ENCODE measurements at regions of chr6 and their contacts with region 1.

Region 1: GRCh38 chr6:147035886-147036285 is 168.3 kb upstream of the STXBP5 start:
- DNase-seq: no peak
- H3K4me3 ChIP-seq: no peak overlapping the region
- H3K27ac ChIP-seq: no peak overlapping the region
- H3K4me1 ChIP-seq: no peaks in the 10 kb centered on the region
- H3K27me3 ChIP-seq: no peaks in the 10 kb centered on the region
- CTCF ChIP-seq: no peak
- POLR2A ChIP-seq: no peak

Region 2: GRCh38 chr6:147733686-147734085 is 697.8 kb after region 1 on chr6:
- intact Hi-C with region 1: loop called (anchors 5 kb)
- DNase-seq: no peak
- H3K4me3 ChIP-seq: no peak overlapping the region
- H3K27ac ChIP-seq: no peak overlapping the region
- H3K4me1 ChIP-seq: no peaks in the 10 kb centered on the region
- H3K27me3 ChIP-seq: no peaks in the 10 kb centered on the region
- CTCF ChIP-seq: no peak
- POLR2A ChIP-seq: no peak

Region 3: DNA sequence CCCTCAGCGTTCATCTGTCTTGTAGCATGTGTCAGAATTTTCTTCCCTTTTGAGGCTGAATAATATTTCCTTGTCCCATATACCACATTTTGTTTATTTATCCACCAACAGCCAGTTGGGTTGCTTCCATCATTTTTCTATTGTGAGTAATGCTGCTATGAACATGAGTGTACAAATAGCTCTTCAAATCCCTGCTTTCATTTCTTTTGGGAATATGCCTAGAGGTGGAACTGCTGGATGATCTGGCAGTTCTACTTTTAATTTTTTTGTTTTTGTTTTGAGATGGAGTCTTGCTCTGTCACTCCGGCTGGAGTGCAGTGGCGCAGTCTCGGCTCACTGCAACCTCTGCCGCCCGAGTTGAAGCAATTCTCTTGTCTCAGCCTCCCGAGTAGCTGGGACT is 1371.5 kb after region 1 on chr6:
- intact Hi-C with region 1: no loop called
- DNase-seq: no peak
- H3K4me3 ChIP-seq: no peak overlapping the region
- H3K27ac ChIP-seq: peak overlapping the region; percentile 80 to 84
- H3K4me1 ChIP-seq: no peaks in the 10 kb centered on the region
- H3K27me3 ChIP-seq: no peaks in the 10 kb centered on the region
- CTCF ChIP-seq: no peak
- POLR2A ChIP-seq: no peak

Measured in breast epithelium (tissue), 4 donors.